Spleen (tissue), 13 donors: ENCODE measurements at regions of chr6 and their contacts with region 1.

Region 1: DNA sequence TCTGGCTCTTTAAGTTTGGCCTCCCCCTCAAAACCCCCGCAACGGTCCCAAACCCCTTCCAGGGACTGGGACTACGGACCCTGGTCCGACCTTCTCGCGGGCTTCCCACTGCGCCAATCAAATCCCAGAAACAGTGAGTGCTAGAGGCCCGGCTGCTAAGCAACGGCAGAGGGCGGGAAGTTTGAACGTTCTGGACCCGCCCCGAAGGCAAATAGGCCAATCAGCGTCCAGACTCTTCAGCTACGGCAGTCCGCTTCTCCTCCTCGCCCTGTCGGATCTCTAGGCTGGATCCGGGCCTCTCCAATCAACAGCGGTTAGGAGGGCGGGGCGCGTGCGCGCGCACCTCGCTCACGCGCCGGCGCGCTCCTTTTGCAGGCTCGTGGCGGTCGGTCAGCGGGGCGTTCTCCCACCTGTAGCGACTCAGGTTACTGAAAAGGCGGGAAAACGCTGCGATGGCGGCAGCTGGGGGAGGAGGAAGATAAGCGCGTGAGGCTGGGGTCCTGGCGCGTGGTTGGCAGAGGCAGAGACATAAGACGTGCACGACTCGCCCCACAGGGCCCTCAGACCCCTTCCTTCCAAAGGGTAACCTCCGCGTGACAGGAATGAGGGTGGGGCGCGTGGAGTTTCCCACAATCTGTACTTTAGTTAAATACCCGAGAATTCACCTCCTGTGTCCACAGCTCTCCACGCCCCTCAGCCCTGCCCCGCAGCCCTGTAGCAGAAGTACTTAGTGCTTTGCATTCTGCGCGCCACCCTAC is at the start of gene MSH5:
- DNase-seq: peak; percentile 98
- H3K4me3 ChIP-seq: peak within 1 kb of the TSS; percentile 74 to 95 (median 86)
- H3K27ac ChIP-seq: peak within 1 kb of the TSS; percentile 70 to 99 (median 96)
- H3K4me1 ChIP-seq: peaks cover 26 to 54% (median 47%) of the 10 kb centered on the region in 6 donors
- H3K27me3 ChIP-seq: no peaks in the 10 kb centered on the region
- CTCF ChIP-seq: no peak
- POLR2A ChIP-seq: no peak
- total RNA-seq, gene MSH5: 20.2 to 35.2 (median 27.6) TPM

Region 2: GRCh38 chr6:31345026-31345730 is 394.6 kb before region 1 on chr6:
- intact Hi-C with region 1: no loop called
- DNase-seq: no peak
- H3K4me3 ChIP-seq: no peak overlapping the region
- H3K27ac ChIP-seq: no peak overlapping the region
- H3K4me1 ChIP-seq: no peaks in the 10 kb centered on the region
- H3K27me3 ChIP-seq: no peaks in the 10 kb centered on the region
- CTCF ChIP-seq: no peak
- POLR2A ChIP-seq: no peak

Region 3: GRCh38 chr6:31356946-31357466 is 382.8 kb before region 1 on chr6 and contains the start of gene HLA-B:
- intact Hi-C with region 1: no loop called
- DNase-seq: peak; percentile 92
- H3K4me3 ChIP-seq: peak within 1 kb of the TSS; percentile 61 to 87 (median 70)
- H3K27ac ChIP-seq: peak within 1 kb of the TSS; percentile 81 to 98 (median 94)
- H3K4me1 ChIP-seq: peaks cover 19 to 52% (median 38%) of the 10 kb centered on the region in 6 donors
- H3K27me3 ChIP-seq: no peaks in the 10 kb centered on the region
- CTCF ChIP-seq: peak in 1 of 11 experiments; percentile 6
- POLR2A ChIP-seq: peak in 1 of 3 donors; percentile 95
- total RNA-seq, gene HLA-B: 3,415 to 5,675 (median 4,969) TPM

Region 4: DNA sequence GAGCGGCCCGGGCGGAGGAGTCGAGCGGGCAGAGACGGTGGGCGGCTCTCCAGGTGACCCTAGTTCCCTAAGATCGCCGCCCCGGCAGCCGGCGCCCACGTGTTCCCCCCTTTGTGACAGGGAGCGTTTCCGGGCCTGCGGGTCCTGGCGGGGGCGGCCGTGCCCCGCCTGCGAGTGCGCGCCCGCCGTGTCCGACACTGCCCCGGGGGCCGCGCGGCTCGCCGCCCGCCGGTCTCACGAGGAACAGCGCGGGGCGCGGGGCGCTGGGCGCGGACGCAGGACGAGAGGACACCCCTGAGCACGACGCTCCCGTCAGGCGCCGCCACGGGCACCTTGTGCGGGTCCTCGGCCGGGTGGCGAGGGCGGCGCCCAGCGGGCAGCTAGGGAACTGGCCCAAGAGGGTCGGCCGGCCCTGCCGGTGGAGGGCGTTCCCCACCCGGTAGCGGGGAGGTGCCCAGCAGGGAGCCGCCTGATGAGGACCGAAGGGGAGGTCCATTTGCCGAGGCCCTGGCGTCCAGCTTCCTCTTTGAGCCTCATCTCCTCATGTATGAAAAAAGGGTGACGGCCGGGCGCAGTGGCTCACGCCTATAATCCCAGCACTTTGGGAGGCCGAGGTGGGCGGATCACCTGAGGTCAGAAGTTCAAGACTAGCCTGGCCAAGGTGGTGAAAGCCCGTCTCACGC is 55.9 kb after region 1 on chr6 and contains the start of gene VARS1:
- intact Hi-C with region 1: loop called (anchors 10 kb)
- DNase-seq: peak; percentile 99
- H3K4me3 ChIP-seq: peak within 1 kb of the TSS; percentile 74 to 98 (median 90)
- H3K27ac ChIP-seq: peak within 1 kb of the TSS; percentile 91 to 100 (median 96)
- H3K4me1 ChIP-seq: peaks cover 18 to 77% (median 57%) of the 10 kb centered on the region in 6 donors
- H3K27me3 ChIP-seq: no peaks in the 10 kb centered on the region
- CTCF ChIP-seq: peak; percentile 83 to 98 (median 93)
- POLR2A ChIP-seq: peak in 1 of 3 donors; percentile 58
- total RNA-seq, gene VARS1: 32.4 to 97.3 (median 62.5) TPM

Region 5: DNA sequence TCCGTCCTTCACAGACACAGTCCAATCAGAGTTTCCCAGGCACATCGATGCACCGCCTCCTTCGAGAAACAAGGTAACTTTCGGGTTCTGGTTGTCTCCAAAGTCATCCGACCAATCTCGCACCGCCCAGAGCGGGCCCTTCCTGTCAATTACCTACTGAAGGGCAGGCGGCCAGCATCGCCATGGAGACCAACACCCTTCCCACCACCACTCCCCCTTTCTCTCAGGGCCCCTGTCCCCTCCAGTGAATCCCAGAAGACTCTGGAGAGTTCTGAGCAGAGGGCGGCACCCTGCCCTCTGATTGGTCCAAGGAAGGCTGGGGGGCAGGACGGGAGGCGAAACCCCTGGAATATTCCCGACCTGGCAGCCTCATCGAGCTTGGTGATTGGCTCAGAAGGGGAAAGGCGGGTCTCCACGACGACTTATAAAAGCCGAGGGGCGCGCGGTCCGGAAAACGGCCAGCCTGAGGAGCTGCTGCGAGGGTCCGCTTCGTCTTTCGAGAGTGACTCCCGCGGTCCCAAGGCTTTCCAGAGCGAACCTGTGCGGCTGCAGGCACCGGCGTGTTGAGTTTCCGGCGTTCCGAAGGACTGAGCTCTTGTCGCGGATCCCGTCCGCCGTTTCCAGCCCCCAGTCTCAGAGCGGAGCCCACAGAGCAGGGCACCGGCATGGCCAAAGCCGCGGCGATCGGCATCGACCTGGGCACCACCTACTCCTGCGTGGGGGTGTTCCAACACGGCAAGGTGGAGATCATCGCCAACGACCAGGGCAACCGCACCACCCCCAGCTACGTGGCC is 87.7 kb after region 1 on chr6 and contains the start of gene HSPA1B:
- intact Hi-C with region 1: loop called (anchors 10 kb)
- DNase-seq: peak; percentile 97
- H3K4me3 ChIP-seq: peak within 1 kb of the TSS; percentile 36 to 71 (median 61)
- H3K27ac ChIP-seq: peak within 1 kb of the TSS; percentile 92 to 98 (median 95)
- H3K4me1 ChIP-seq: peaks cover 28 to 73% (median 53%) of the 10 kb centered on the region in 6 donors
- H3K27me3 ChIP-seq: no peaks in the 10 kb centered on the region
- CTCF ChIP-seq: peak in 2 of 11 experiments; percentile 9 to 27
- POLR2A ChIP-seq: peak; percentile 95 to 100 (median 97)
- total RNA-seq, gene HSPA1B: 40.4 to 372 (median 48.3) TPM